T-cell (primary cell): ENCODE measurements at regions of chr5 and their contacts with region 1.

Region 1: GRCh38 chr5:76701298-76701697 is 14.6 kb upstream of the F2R start:
- DNase-seq: no peak
- ATAC-seq: no peak
- H3K4me3 ChIP-seq: no peak overlapping the region
- H3K4me3 Mint-ChIP-seq: no peak overlapping the region
- H3K27ac ChIP-seq: no peak overlapping the region
- H3K27ac Mint-ChIP-seq: no peak overlapping the region
- H3K4me1 ChIP-seq: no peaks in the 10 kb centered on the region
- H3K4me1 Mint-ChIP-seq: no peaks in the 10 kb centered on the region
- H3K27me3 ChIP-seq: no peaks in the 10 kb centered on the region
- H3K27me3 Mint-ChIP-seq: no peaks in the 10 kb centered on the region

Region 2: DNA sequence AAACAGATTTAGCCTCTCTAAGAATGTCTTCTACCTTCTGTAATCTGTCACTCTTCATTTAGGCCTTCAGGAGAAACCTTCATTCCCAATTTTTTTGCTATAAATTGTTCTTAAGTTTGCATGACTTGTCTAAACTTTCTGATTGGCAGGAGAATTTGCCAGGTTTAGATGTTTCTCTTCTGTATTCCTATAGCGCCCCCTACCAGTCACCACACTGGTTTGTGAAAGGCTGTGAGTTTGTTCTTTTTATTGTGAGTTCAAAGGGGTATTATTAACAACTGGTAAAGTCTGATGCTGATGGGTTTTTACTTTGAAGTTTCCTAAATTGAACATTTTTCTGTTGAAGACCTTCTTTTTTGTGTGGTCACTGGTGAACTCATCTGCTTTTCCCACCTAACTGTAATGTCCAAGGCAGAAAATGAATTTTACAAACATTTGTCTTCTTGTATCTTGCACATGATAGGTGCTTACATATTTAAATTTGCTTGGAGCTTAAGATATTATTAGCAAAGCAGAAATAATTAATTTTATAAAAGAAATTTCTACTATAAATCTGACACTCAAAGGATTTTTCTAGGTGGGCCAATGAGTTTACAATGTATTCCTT is 59.7 kb before region 1 on chr5:
- CTCF ChIA-PET with region 1: no interaction called
- POLR2A ChIA-PET with region 1: interaction called in 1 of 2 experiments, 14 read pairs
- DNase-seq: peak; percentile 3 to 77 (median 52)
- ATAC-seq: peak in 2 of 4 experiments; percentile 59 to 62
- H3K4me3 ChIP-seq: no peak overlapping the region
- H3K4me3 Mint-ChIP-seq: no peak overlapping the region
- H3K27ac ChIP-seq: no peak overlapping the region
- H3K27ac Mint-ChIP-seq: no peak overlapping the region
- H3K4me1 ChIP-seq: no peaks in the 10 kb centered on the region
- H3K4me1 Mint-ChIP-seq: peaks cover 0 to 5% (median 3%) of the 10 kb centered on the region in 3 donors
- H3K27me3 ChIP-seq: no peaks in the 10 kb centered on the region
- H3K27me3 Mint-ChIP-seq: no peaks in the 10 kb centered on the region

Region 3: GRCh38 chr5:76679231-76679630 is 22.1 kb before region 1 on chr5:
- CTCF ChIA-PET with region 1: no interaction called
- POLR2A ChIA-PET with region 1: no interaction called
- DNase-seq: no peak
- ATAC-seq: no peak
- H3K4me3 ChIP-seq: no peak overlapping the region
- H3K4me3 Mint-ChIP-seq: no peak overlapping the region
- H3K27ac ChIP-seq: no peak overlapping the region
- H3K27ac Mint-ChIP-seq: no peak overlapping the region
- H3K4me1 ChIP-seq: no peaks in the 10 kb centered on the region
- H3K4me1 Mint-ChIP-seq: peaks cover 0 to 4% (median 0%) of the 10 kb centered on the region in 3 donors
- H3K27me3 ChIP-seq: no peaks in the 10 kb centered on the region
- H3K27me3 Mint-ChIP-seq: no peaks in the 10 kb centered on the region

Region 4: DNA sequence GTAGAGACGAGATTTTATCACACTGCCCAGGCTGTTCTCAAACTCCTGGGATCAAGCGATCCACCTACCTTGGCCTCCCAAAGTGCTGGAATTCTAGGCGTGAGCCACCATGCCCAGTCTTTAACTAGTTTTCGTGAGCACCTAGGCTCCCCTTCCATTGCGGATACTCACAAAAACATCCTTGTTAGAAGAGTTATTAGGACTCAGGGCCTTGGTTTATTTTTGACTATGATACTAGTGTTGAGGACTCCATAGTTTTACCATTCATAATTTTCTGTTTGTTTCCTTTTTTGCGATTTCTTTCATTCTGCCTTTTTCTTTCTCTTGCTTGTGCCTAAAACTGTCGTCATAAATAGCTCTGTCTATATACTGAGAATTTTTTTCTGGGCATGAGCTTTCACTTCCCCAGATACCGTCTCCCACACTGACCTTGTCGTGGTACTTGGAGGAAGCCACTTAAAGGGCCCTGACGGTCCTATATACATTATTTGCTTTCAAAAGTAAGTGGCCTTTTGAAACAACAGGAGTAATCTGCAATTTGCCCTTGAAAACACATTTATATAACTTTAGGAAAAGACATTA is 19.8 kb after region 1 on chr5:
- CTCF ChIA-PET with region 1: no interaction called
- POLR2A ChIA-PET with region 1: no interaction called
- DNase-seq: no peak
- ATAC-seq: no peak
- H3K4me3 ChIP-seq: no peak overlapping the region
- H3K4me3 Mint-ChIP-seq: no peak overlapping the region
- H3K27ac ChIP-seq: no peak overlapping the region
- H3K27ac Mint-ChIP-seq: no peak overlapping the region
- H3K4me1 ChIP-seq: peaks cover 3 to 34% of the 10 kb centered on the region in 2 experiments
- H3K4me1 Mint-ChIP-seq: peaks cover 11 to 34% (median 31%) of the 10 kb centered on the region in 3 donors
- H3K27me3 ChIP-seq: peaks cover 0 to 7% of the 10 kb centered on the region in 2 experiments
- H3K27me3 Mint-ChIP-seq: peaks cover 15 to 16% of the 10 kb centered on the region in 2 donors